ENCODE measurements at regions of chr13 and their contacts with region 1.

Region 1: GRCh38 chr13:34941835-34942731 is at the start of gene NBEA:
- DNase-seq: peak; percentile 68
- H3K4me3 Mint-ChIP-seq: peak within 1 kb of the TSS; percentile 85
- H3K27ac Mint-ChIP-seq: no peak within 1 kb of the TSS
- H3K4me1 Mint-ChIP-seq: peaks cover 16% of the 10 kb centered on the region
- H3K27me3 Mint-ChIP-seq: peaks cover 52% of the 10 kb centered on the region
- total RNA-seq, gene NBEA: 0.14 and 0.23 TPM in 2 replicates

Region 2: GRCh38 chr13:33817901-33818706 is 1124.0 kb before region 1 on chr13 and contains the start of gene RFC3:
- intact Hi-C with region 1: loop called (anchors 10 kb)
- DNase-seq: peak; percentile 90
- H3K4me3 Mint-ChIP-seq: peak within 1 kb of the TSS; percentile 99
- H3K27ac Mint-ChIP-seq: peak within 1 kb of the TSS; percentile 96
- H3K4me1 Mint-ChIP-seq: peaks cover 37% of the 10 kb centered on the region
- H3K27me3 Mint-ChIP-seq: peaks cover 3% of the 10 kb centered on the region
- total RNA-seq, gene RFC3: 55.2 and 55.4 TPM in 2 replicates

Region 3: GRCh38 chr13:34611671-34612070 is 330.4 kb before region 1 on chr13:
- intact Hi-C with region 1: no loop called
- DNase-seq: no peak
- H3K4me3 Mint-ChIP-seq: no peak overlapping the region
- H3K27ac Mint-ChIP-seq: no peak overlapping the region
- H3K4me1 Mint-ChIP-seq: no peaks in the 10 kb centered on the region
- H3K27me3 Mint-ChIP-seq: no peaks in the 10 kb centered on the region

Region 4: DNA sequence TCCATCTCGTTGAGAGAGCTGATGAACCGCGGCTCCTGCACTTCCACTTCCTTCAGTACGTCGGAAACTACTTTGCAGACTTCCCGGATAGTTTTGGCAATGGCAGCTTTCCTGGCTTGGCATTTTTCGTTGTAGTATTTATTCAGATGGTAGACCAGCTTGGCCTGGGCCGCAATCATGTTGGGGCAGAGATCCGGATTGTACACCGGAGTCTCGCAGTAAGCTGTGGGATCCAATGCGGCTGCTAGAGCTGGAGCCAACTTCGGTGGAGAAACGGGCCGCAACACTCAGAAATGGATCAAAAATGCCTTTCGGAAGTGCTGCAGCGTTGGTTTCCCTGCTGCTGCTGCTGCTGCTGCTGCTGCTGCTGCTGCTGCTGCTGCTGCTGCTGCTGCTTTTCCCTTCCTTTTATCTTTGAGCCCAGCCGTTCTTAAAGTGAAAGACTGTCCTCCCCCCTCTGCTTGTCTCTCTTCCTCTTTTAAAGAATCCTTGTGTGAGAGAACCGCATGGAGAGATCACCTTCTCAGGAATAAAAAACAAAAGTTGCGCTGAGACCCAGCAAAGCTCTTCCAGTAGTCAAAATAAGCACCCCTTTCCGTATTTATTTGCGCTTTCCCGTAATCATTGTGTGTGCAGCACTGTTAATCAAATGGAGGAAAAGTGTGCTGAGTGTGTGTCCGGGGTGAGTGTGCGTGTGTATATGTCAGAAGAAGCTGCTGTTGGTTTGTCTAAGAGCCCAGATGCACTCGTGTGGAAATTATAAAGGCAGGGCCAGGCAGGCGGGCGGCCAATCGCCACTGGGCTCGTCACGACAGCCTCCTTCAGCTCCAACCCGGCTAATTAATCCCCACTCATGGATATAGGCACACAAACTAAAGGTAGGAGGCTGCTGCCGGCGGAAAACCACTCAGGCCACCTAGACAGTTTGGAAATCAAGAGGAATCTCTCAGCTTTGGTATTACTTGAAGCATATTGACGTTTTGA is 534.2 kb after region 1 on chr13 and contains the start of gene MAB21L1:
- intact Hi-C with region 1: loop called (anchors 5 kb)
- DNase-seq: no peak
- H3K4me3 Mint-ChIP-seq: peak within 1 kb of the TSS; percentile 68
- H3K27ac Mint-ChIP-seq: peak within 1 kb of the TSS; percentile 30
- H3K4me1 Mint-ChIP-seq: peaks cover 16% of the 10 kb centered on the region
- H3K27me3 Mint-ChIP-seq: peaks cover 70% of the 10 kb centered on the region
- total RNA-seq, gene MAB21L1: 0.07 TPM in 2 replicates

Measured in activated T-helper 2 cell treated with anti-CD3 and anti-CD28 coated beads, Interferon-gamma antibody, Interleukin-2, Interleukin-4, amounts not matched to agents 10 μg/mL and 5 μg/mL and 100 μg/mL, durations not matched to agents 14 hours and 24 hours and 36 hours (primary cell).